Dendritic cell treated with granulocyte-macrophage colony-stimulating factor and Interleukin-4, amounts not matched to agents 40 ng/mL and 50 ng/mL, for 4 days (primary cell): ENCODE measurements at regions of chr20 and their contacts with region 1.

Region 1: DNA sequence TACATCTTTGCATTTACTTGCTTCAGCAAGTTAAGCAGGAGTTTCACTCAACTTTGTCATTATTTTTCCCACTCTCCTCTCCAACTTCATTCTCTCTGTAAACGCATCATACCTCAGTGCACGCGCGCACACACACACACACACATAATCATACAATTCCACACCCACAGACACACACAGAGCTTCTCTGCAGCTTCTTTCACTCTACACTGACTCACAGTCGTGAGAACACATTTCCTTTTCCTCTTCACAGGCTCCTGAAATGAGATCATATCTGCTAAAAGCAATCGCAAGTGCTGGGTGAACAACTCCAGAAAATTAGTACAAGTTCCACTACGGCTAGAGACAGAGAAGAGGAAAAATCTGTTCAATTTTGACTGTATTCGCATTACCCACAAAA is 215.4 kb downstream of the PTPRT start:
- H3K4me3 Mint-ChIP-seq: no peak overlapping the region
- H3K27ac Mint-ChIP-seq: no peak overlapping the region
- H3K4me1 Mint-ChIP-seq: no peaks in the 10 kb centered on the region
- H3K27me3 Mint-ChIP-seq: no peaks in the 10 kb centered on the region

Region 2: DNA sequence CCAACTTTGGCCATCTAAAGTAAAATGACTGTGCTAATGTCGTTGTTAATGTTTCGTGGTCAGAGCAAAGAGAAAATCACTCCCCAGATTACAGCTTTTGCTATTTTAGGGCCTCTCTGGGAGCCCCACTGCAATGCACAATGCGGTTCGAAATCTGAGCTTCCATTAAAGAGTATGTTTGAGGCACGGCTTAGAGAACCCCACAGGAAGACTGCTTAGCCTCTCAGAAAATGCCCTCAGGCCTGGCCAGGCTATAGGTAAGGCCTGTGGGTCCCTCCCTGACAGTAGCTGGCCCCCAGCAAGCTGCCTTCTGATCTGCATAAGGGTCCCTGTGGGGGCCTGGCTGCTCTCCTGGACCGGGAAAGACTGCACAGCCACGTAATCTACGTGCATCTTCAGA is 59.3 kb before region 1 on chr20:
- intact Hi-C with region 1: loop called (anchors 10 kb)
- H3K4me3 Mint-ChIP-seq: no peak overlapping the region
- H3K27ac Mint-ChIP-seq: no peak overlapping the region
- H3K4me1 Mint-ChIP-seq: no peaks in the 10 kb centered on the region
- H3K27me3 Mint-ChIP-seq: no peaks in the 10 kb centered on the region